Natural killer cell (primary cell): ENCODE measurements at regions of chr2 and their contacts with region 1.

Region 1: DNA sequence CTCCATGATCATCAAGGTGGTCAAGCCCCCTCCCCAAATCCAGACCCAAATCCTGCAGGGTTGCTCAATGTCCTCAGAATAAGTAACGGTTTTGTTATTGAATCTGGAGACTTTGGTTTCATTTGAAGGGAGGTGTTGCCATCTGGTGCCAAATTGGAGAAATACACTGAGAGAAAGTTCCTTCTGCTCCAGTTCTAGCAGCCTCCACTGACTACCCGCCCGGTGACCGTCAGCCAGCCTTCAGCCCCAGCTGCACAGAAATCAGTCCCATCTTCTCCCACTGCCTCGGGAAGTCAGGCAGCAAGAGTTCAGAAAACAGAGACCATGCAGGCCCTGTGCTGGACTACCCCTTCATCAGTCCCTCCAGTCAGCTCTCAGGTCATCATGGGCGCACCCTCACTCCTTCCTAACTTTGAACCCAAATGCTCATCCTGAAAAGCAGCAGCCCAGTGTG is 38.7 kb downstream of the PKDCC start:
- DNase-seq: peak in 1 of 2 donors; percentile 78
- ATAC-seq: peak; percentile 56 to 87 (median 69)
- H3K4me3 ChIP-seq: no peak overlapping the region
- H3K4me3 Mint-ChIP-seq: no peak overlapping the region
- H3K27ac ChIP-seq: no peak overlapping the region
- H3K27ac Mint-ChIP-seq: no peak overlapping the region
- H3K4me1 ChIP-seq: peaks cover 5% of the 10 kb centered on the region
- H3K4me1 Mint-ChIP-seq: peaks cover 8 to 11% of the 10 kb centered on the region in 2 donors
- H3K27me3 ChIP-seq: peaks cover 3% of the 10 kb centered on the region
- H3K27me3 Mint-ChIP-seq: peaks cover 10 to 21% of the 10 kb centered on the region in 2 donors
- CTCF ChIP-seq: peak; percentile 74

Region 2: GRCh38 chr2:41840702-41841551 is 245.6 kb before region 1 on chr2:
- intact Hi-C with region 1: loop called (anchors 1 kb)
- DNase-seq: peak; percentile 92 to 98
- ATAC-seq: peak; percentile 98 to 100 (median 98)
- H3K4me3 ChIP-seq: peak overlapping the region; percentile 83
- H3K4me3 Mint-ChIP-seq: peak overlapping the region; percentile 98
- H3K27ac ChIP-seq: peak overlapping the region; percentile 77
- H3K27ac Mint-ChIP-seq: peak overlapping the region; percentile 83 to 93
- H3K4me1 ChIP-seq: peaks cover 11% of the 10 kb centered on the region
- H3K4me1 Mint-ChIP-seq: peaks cover 15 to 16% of the 10 kb centered on the region in 2 donors
- H3K27me3 ChIP-seq: peaks cover 10% of the 10 kb centered on the region
- H3K27me3 Mint-ChIP-seq: peaks cover 28 to 38% of the 10 kb centered on the region in 2 donors
- CTCF ChIP-seq: peak; percentile 94

Region 3: GRCh38 chr2:41869542-41870264 is 216.8 kb before region 1 on chr2:
- intact Hi-C with region 1: loop called (anchors 1 kb)
- DNase-seq: peak; percentile 72 to 87
- ATAC-seq: peak; percentile 68 to 91 (median 91)
- H3K4me3 ChIP-seq: no peak overlapping the region
- H3K4me3 Mint-ChIP-seq: no peak overlapping the region
- H3K27ac ChIP-seq: no peak overlapping the region
- H3K27ac Mint-ChIP-seq: no peak overlapping the region
- H3K4me1 ChIP-seq: peaks cover 26% of the 10 kb centered on the region
- H3K4me1 Mint-ChIP-seq: peaks cover 8 to 16% of the 10 kb centered on the region in 2 donors
- H3K27me3 ChIP-seq: peaks cover 8% of the 10 kb centered on the region
- H3K27me3 Mint-ChIP-seq: peaks cover 22 to 37% of the 10 kb centered on the region in 2 donors
- CTCF ChIP-seq: peak; percentile 94

Region 4: GRCh38 chr2:41937464-41937906 is 149.0 kb before region 1 on chr2:
- intact Hi-C with region 1: no loop called
- DNase-seq: no peak
- ATAC-seq: no peak
- H3K4me3 ChIP-seq: no peak overlapping the region
- H3K4me3 Mint-ChIP-seq: no peak overlapping the region
- H3K27ac ChIP-seq: no peak overlapping the region
- H3K27ac Mint-ChIP-seq: no peak overlapping the region
- H3K4me1 ChIP-seq: no peaks in the 10 kb centered on the region
- H3K4me1 Mint-ChIP-seq: no peaks in the 10 kb centered on the region
- H3K27me3 ChIP-seq: no peaks in the 10 kb centered on the region
- H3K27me3 Mint-ChIP-seq: peaks cover 21 to 26% of the 10 kb centered on the region in 2 donors
- CTCF ChIP-seq: no peak